ENCODE measurements at regions of chr12 and their contacts with region 1.

Region 1: GRCh38 chr12:53213348-53213747 is 6.3 kb upstream of the ITGB7 start:
- DNase-seq: peak; percentile 81 to 91
- ATAC-seq: peak; percentile 79 to 92
- H3K4me3 ChIP-seq: no peak overlapping the region
- H3K27ac ChIP-seq: no peak overlapping the region
- H3K4me1 ChIP-seq: peaks cover 21% of the 10 kb centered on the region
- CTCF ChIP-seq: peak; percentile 97
- EP300 ChIP-seq: no peak
- POLR2A ChIP-seq: no peak
- RAD21 ChIP-seq: peak; percentile 98 to 99

Region 2: GRCh38 chr12:53159195-53159839 is 54.0 kb before region 1 on chr12:
- CTCF ChIA-PET with region 1: interaction called, 55 read pairs
- POLR2A ChIA-PET with region 1: no interaction called
- DNase-seq: peak; percentile 89 to 96
- ATAC-seq: peak; percentile 97 to 98
- H3K4me3 ChIP-seq: no peak overlapping the region
- H3K27ac ChIP-seq: peak overlapping the region; percentile 55 to 82
- H3K4me1 ChIP-seq: peaks cover 12% of the 10 kb centered on the region
- CTCF ChIP-seq: peak; percentile 93
- EP300 ChIP-seq: no peak
- POLR2A ChIP-seq: no peak
- RAD21 ChIP-seq: peak; percentile 89 to 93

Region 3: GRCh38 chr12:53232646-53233461 is 19.5 kb after region 1 on chr12:
- CTCF ChIA-PET with region 1: interaction called, 137 read pairs
- POLR2A ChIA-PET with region 1: no interaction called
- DNase-seq: peak; percentile 47 to 64
- ATAC-seq: peak; percentile 65 to 72
- H3K4me3 ChIP-seq: peak overlapping the region; percentile 69
- H3K27ac ChIP-seq: peak overlapping the region; percentile 84 to 92
- H3K4me1 ChIP-seq: peaks cover 36% of the 10 kb centered on the region
- CTCF ChIP-seq: no peak
- EP300 ChIP-seq: no peak
- POLR2A ChIP-seq: no peak
- RAD21 ChIP-seq: no peak

Region 4: DNA sequence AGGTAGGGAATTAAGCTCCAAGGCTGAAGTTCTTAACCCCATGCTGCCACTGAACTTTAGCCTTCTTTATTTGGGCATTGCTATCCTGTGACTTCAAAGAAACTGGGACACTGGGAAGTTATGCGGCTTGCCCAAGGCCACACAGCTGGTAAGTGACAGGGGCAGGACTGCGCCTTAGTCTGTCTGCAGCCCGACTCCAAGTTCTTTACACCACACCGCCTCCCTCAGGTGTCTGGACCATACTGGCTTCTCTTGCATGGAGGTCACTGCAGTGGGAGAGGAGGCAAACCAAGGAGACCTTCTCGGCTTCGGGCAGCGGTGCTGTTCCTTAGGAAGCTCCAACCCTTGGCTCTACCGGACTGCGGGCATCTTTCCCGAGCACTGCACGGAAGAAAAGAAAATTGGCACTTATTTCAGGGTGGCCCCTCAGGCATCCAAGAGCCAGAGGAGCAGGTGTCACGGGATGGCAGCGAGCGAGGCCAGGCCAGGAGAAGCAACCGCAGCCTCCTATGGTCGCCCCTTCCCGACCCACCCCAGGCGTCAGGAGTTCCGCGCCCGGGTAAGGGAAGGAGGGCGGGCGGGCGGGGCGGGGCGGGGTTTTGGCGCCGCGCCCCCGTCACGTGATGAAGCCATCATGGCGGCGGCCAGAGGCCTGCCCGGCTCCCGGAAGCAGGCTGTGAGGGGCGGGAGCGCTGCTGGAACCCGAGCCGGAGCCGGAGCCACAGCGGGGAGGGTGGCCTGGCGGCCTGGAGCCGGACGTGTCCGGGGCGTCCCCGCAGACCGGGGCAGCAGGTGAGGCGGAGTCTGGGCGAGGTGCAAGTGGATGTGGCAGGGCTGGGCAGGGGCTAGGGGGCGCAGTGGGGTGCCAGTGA is 38.4 kb after region 1 on chr12:
- CTCF ChIA-PET with region 1: interaction called, 216 read pairs
- POLR2A ChIA-PET with region 1: interaction called, 3 read pairs
- DNase-seq: peak; percentile 83 to 87
- ATAC-seq: peak; percentile 90 to 92
- H3K4me3 ChIP-seq: peak overlapping the region; percentile 90
- H3K27ac ChIP-seq: peak overlapping the region; percentile 91 to 94
- H3K4me1 ChIP-seq: peaks cover 16% of the 10 kb centered on the region
- CTCF ChIP-seq: peak; percentile 47
- EP300 ChIP-seq: no peak
- POLR2A ChIP-seq: peak; percentile 92
- RAD21 ChIP-seq: peak; percentile 64 to 69

Region 5: DNA sequence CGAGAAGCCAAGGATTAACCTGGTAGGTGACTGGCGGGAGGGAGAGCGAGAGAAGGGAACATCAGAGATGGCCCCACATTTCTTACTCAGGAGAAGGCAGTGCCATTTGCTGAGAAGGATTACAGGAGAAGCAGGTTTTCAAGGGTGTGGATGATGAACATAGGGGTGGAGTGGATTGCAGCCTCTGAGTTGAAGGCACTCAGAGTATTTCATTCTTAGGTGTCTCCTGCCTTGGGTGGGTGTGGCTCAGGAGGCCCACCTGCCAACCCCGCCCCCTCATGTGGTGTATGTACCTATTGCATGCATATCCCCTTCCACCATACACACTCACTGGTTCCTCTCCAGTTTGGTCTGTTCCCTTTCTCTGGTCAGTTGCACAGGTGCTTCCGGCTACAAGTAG is 61.1 kb after region 1 on chr12:
- CTCF ChIA-PET with region 1: interaction called, 1,046 read pairs
- POLR2A ChIA-PET with region 1: no interaction called
- DNase-seq: no peak
- ATAC-seq: no peak
- H3K4me3 ChIP-seq: no peak overlapping the region
- H3K27ac ChIP-seq: no peak overlapping the region
- H3K4me1 ChIP-seq: peaks cover 5% of the 10 kb centered on the region
- CTCF ChIP-seq: no peak
- EP300 ChIP-seq: no peak
- POLR2A ChIP-seq: no peak
- RAD21 ChIP-seq: no peak

Region 6: DNA sequence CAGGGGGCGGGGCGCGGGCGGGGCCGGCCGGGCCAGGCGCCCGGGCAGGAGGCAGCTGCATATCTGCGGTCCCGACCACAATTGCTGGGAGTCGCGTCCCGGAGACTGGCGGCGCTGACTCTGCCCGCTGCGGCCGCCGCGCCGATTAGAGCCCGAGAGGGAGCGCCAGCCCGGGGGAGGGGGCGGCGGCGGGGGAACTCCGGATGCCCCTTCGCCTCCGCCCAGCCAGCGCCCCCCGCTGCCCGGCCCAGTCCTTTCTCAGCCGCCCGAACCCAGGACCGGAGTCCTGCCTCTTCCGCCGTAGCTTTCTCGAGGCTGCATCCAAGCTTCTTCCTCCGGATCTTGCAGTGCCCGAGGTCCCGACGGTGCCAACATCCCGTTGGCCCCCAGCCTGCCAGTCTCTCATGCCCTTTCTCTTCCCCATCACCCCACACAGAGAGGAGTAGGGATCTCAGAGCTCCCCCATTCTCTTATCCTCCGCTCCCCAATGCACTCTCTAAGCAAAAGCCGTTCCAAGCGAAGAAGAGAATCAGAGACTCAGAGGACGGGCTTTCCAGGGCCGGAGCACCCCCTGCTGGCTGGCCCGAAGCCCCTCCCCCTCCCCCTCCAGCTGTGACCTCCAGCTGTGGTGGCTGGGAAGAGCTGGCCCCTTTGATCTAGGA is 131.6 kb after region 1 on chr12:
- CTCF ChIA-PET with region 1: interaction called, 27 read pairs
- POLR2A ChIA-PET with region 1: no interaction called
- DNase-seq: peak; percentile 68 to 76
- ATAC-seq: peak; percentile 87 to 88
- H3K4me3 ChIP-seq: peak overlapping the region; percentile 64
- H3K27ac ChIP-seq: peak overlapping the region; percentile 81 to 93
- H3K4me1 ChIP-seq: peaks cover 9% of the 10 kb centered on the region; the same call in 2 of the 3 replicates
- CTCF ChIP-seq: peak; percentile 74
- EP300 ChIP-seq: no peak
- POLR2A ChIP-seq: peak; percentile 59
- RAD21 ChIP-seq: peak; percentile 74 to 79

Measured in A549 (cell line).